Dendritic cell treated with granulocyte-macrophage colony-stimulating factor and Interleukin-4, amounts not matched to agents 40 ng/mL and 50 ng/mL, for 4 days (primary cell): ENCODE measurements at regions of chr17 and their contacts with region 1.

Region 1: GRCh38 chr17:42132941-42133340 is 10.3 kb downstream of the HSPB9 start:
- H3K4me3 Mint-ChIP-seq: peak overlapping the region; percentile 64
- H3K27ac Mint-ChIP-seq: peak overlapping the region; percentile 85
- H3K4me1 Mint-ChIP-seq: peaks cover 84% of the 10 kb centered on the region
- H3K27me3 Mint-ChIP-seq: no peaks in the 10 kb centered on the region

Region 2: GRCh38 chr17:42167807-42168206 is 34.9 kb after region 1 on chr17:
- intact Hi-C with region 1: loop called (anchors 5 kb)
- H3K4me3 Mint-ChIP-seq: peak overlapping the region; percentile 27
- H3K27ac Mint-ChIP-seq: peak overlapping the region; percentile 20
- H3K4me1 Mint-ChIP-seq: peaks cover 27% of the 10 kb centered on the region
- H3K27me3 Mint-ChIP-seq: peaks cover 38% of the 10 kb centered on the region